CD14-positive monocyte (primary cell): ENCODE measurements at regions of chr16 and their contacts with region 1.

Region 1: DNA sequence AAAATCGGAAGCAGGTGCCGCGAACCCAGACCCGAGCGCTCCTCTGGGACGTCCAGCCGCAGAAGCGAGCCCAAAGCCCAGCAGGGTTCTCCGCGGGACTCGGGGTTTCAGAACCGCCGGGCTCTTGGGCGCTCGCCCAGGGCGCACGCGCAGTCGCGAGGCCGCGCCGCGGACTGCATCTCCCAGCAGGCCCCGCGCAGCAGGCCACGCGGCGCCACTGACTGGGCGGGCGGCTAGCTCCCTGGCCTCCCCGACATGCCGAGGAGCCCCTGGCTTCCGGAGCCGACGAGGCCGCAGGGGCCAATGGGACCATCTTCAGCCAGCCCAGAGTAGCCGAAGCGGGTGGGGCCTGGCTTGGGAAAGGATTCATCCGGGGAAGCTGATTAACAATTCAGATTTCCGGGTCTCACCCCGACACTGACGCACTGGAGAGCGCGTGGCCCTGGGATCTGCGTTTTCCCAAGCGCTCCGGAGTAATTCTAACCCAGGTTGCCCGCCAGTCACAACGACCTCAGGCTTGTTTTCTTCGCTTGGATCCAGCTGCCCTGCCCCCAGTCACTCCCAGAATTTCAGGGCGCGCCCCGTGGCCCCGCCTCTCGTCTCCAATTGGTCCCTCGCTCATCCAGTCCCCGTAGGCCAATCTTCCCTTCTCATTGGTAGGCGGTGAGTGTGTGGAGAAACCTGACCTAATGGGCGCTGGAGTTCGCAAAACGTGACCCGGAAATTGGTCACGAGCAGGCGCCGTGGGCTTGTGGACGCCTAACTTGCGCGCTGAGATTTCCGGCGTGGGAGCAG is at the start of gene ZNF263:
- DNase-seq: peak; percentile 94 to 97 (median 97)
- H3K4me3 ChIP-seq: peak within 1 kb of the TSS; percentile 79 to 90 (median 87)
- H3K4me3 Mint-ChIP-seq: peak within 1 kb of the TSS; percentile 91 to 98
- H3K27ac ChIP-seq: peak within 1 kb of the TSS; percentile 96
- H3K27ac Mint-ChIP-seq: peak within 1 kb of the TSS; percentile 95 to 99 (median 96)
- H3K4me1 ChIP-seq: peaks cover 37 to 43% of the 10 kb centered on the region in 2 donors
- H3K4me1 Mint-ChIP-seq: peaks cover 28% of the 10 kb centered on the region
- H3K27me3 ChIP-seq: peaks cover 0 to 4% of the 10 kb centered on the region in 2 donors
- H3K27me3 Mint-ChIP-seq: peaks cover 5 to 9% (median 7%) of the 10 kb centered on the region in 3 donors
- CTCF ChIP-seq: no peak
- polyA plus RNA-seq, gene ZNF263: 11.5 to 21.5 (median 13.1) TPM

Region 2: GRCh38 chr16:3234543-3235541 is 48.1 kb before region 1 on chr16 and contains the start of gene ZNF200:
- intact Hi-C with region 1: loop called (anchors 2 kb)
- DNase-seq: peak; percentile 88 to 91 (median 91)
- H3K4me3 ChIP-seq: peak within 1 kb of the TSS; percentile 73 to 97 (median 75)
- H3K4me3 Mint-ChIP-seq: peak within 1 kb of the TSS; percentile 91 to 96
- H3K27ac ChIP-seq: peak within 1 kb of the TSS; percentile 86 to 97
- H3K27ac Mint-ChIP-seq: peak within 1 kb of the TSS; percentile 97 to 99 (median 99)
- H3K4me1 ChIP-seq: peaks cover 12 to 13% of the 10 kb centered on the region in 2 donors
- H3K4me1 Mint-ChIP-seq: peaks cover 18% of the 10 kb centered on the region
- H3K27me3 ChIP-seq: no peaks in the 10 kb centered on the region
- H3K27me3 Mint-ChIP-seq: peaks cover 0 to 2% (median 1%) of the 10 kb centered on the region in 3 donors
- CTCF ChIP-seq: no peak
- polyA plus RNA-seq, gene ZNF200: 2.0 to 2.8 (median 2.5) TPM

Region 3: DNA sequence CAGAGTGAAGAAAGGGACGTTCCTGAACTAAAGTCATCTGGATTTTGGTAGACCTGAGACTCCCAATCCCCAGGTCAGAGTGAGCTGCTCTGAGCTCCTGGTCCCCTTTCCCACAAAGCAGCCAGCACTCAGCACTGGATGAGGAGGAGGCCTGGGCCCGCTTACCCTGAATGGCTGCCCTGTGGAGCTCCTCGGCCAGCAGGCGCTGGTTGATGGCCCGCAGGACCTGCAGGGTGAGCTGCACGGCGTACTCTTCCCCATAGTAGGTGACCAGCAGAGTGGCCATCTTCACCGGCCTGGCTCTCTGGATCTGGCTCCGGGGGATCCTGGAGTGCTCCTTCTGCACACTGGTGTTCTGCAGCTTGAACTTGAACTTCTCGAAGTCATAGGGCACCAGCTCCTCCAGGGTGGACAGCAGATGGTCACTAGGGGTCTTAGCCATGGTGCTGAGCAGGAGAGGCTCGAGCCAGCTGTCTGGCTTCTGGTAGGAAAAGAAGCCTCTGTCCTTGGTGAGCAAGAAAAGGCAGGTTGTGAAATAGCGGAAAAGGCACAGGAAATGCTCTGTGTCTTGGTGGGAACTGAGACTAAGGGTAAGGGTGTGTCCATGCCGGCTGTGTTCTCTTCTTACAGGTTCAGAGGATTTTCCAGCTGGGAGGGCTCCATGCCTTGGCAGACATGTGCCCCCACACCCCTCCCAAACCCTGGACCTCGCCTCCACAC is 26.6 kb before region 1 on chr16 and contains the start of gene MEFV:
- intact Hi-C with region 1: loop called in 1 of 2 experiments (anchors 2 kb)
- DNase-seq: peak; percentile 76 to 93 (median 92)
- H3K4me3 ChIP-seq: peak within 1 kb of the TSS; percentile 85 to 98 (median 92)
- H3K4me3 Mint-ChIP-seq: peak within 1 kb of the TSS; percentile 97 to 99
- H3K27ac ChIP-seq: peak within 1 kb of the TSS; percentile 90 to 98
- H3K27ac Mint-ChIP-seq: peak within 1 kb of the TSS; percentile 93 to 99 (median 98)
- H3K4me1 ChIP-seq: peaks cover 87 to 96% of the 10 kb centered on the region in 2 donors
- H3K4me1 Mint-ChIP-seq: peaks cover 95% of the 10 kb centered on the region
- H3K27me3 ChIP-seq: no peaks in the 10 kb centered on the region
- H3K27me3 Mint-ChIP-seq: peaks cover 0 to 2% (median 0%) of the 10 kb centered on the region in 3 donors
- CTCF ChIP-seq: no peak
- polyA plus RNA-seq, gene MEFV: 37.7 to 78.0 (median 73.2) TPM

Region 4: DNA sequence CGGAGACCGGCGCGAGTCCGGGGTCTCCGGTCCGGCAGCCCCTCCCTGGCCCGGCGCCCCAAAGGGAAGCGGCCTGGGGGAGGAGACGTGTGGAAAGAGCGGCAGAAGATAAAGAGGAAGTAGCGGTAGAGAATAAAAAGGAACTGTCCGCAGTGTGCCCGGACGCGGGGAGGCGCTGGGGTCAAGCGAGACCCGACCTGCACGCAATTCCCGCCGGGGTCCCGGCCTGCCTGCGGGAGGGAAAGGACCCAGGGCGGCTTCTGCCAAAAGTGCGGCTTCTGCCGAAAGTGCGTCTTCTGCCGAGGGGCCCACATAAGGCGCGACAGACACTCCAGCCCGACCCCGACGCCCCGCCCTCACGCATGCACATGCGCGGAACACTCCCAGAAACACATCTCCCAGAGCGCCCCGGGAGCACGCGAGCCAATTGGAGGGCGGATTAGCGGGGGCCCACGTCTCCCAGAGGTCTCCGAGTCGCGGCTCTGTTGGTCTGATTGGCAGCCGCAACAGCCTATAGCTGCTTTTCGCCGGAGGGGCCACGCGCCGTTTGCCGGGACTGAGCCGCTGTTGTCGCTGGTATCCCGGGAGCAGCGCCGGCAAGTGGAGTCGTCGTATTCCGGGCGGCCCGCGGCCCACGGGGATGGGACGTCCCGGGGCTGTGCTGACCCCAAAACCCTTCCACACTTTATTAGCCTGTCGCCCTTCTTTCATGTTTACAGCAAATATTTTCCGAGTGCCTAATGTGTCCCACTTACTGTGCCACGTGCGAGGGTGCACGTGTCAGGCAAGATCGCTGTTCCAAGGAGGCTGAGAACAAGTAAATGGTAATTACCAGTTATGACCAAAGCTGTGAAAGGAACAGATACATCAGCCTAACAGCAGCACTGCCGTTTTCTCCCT is 18.5 kb before region 1 on chr16:
- intact Hi-C with region 1: loop called in 1 of 2 experiments (anchors 2 kb)
- DNase-seq: peak; percentile 90 to 94 (median 92)
- H3K4me3 ChIP-seq: peak overlapping the region; percentile 81 to 89 (median 81)
- H3K4me3 Mint-ChIP-seq: peak overlapping the region; percentile 86 to 91
- H3K27ac ChIP-seq: peak overlapping the region; percentile 99 to 100
- H3K27ac Mint-ChIP-seq: peak overlapping the region; percentile 96 to 100 (median 98)
- H3K4me1 ChIP-seq: peaks cover 54 to 63% of the 10 kb centered on the region in 2 donors
- H3K4me1 Mint-ChIP-seq: peaks cover 68% of the 10 kb centered on the region
- H3K27me3 ChIP-seq: no peaks in the 10 kb centered on the region
- H3K27me3 Mint-ChIP-seq: peaks cover 0 to 6% (median 0%) of the 10 kb centered on the region in 3 donors
- CTCF ChIP-seq: peak; percentile 58

Region 5: GRCh38 chr16:3400779-3401688 is 118.1 kb after region 1 on chr16 and contains the starts of genes ZNF174 and ZSCAN32:
- intact Hi-C with region 1: loop called in 1 of 2 experiments (anchors 1 kb)
- DNase-seq: peak; percentile 98 to 99 (median 98)
- H3K4me3 ChIP-seq: peak within 1 kb of the TSS; percentile 72 to 90 (median 86)
- H3K4me3 Mint-ChIP-seq: peak within 1 kb of the TSS; percentile 85 to 96
- H3K27ac ChIP-seq: peak within 1 kb of the TSS; percentile 39 to 80
- H3K27ac Mint-ChIP-seq: peak within 1 kb of the TSS; percentile 79 to 89 (median 82)
- H3K4me1 ChIP-seq: peaks cover 19 to 30% of the 10 kb centered on the region in 2 donors
- H3K4me1 Mint-ChIP-seq: peaks cover 25% of the 10 kb centered on the region
- H3K27me3 ChIP-seq: no peaks in the 10 kb centered on the region
- H3K27me3 Mint-ChIP-seq: peaks cover 0 to 2% (median 0%) of the 10 kb centered on the region in 3 donors
- CTCF ChIP-seq: no peak
- polyA plus RNA-seq, gene ZNF174: 2.5 to 5.6 (median 4.9) TPM
- polyA plus RNA-seq, gene ZSCAN32: 5.7 to 7.7 (median 7.2) TPM

Region 6: GRCh38 chr16:3443108-3444031 is 160.4 kb after region 1 on chr16 and contains the starts of genes NAA60 and ZNF597:
- intact Hi-C with region 1: loop called in 1 of 2 experiments (anchors 5 kb)
- DNase-seq: peak; percentile 81 to 89 (median 87)
- H3K4me3 ChIP-seq: peak within 1 kb of the TSS; percentile 45 to 82 (median 76)
- H3K4me3 Mint-ChIP-seq: peak within 1 kb of the TSS; percentile 96 to 98
- H3K27ac ChIP-seq: peak within 1 kb of the TSS; percentile 68 to 79
- H3K27ac Mint-ChIP-seq: peak within 1 kb of the TSS; percentile 84 to 99 (median 94)
- H3K4me1 ChIP-seq: peaks cover 11 to 19% of the 10 kb centered on the region in 2 donors
- H3K4me1 Mint-ChIP-seq: peaks cover 11% of the 10 kb centered on the region
- H3K27me3 ChIP-seq: no peaks in the 10 kb centered on the region
- H3K27me3 Mint-ChIP-seq: peaks cover 3 to 9% (median 5%) of the 10 kb centered on the region in 3 donors
- CTCF ChIP-seq: no peak
- polyA plus RNA-seq, gene NAA60: 19.5 to 48.8 (median 29.7) TPM
- polyA plus RNA-seq, gene ZNF597: 0.80 to 1.0 (median 0.98) TPM

Region 7: DNA sequence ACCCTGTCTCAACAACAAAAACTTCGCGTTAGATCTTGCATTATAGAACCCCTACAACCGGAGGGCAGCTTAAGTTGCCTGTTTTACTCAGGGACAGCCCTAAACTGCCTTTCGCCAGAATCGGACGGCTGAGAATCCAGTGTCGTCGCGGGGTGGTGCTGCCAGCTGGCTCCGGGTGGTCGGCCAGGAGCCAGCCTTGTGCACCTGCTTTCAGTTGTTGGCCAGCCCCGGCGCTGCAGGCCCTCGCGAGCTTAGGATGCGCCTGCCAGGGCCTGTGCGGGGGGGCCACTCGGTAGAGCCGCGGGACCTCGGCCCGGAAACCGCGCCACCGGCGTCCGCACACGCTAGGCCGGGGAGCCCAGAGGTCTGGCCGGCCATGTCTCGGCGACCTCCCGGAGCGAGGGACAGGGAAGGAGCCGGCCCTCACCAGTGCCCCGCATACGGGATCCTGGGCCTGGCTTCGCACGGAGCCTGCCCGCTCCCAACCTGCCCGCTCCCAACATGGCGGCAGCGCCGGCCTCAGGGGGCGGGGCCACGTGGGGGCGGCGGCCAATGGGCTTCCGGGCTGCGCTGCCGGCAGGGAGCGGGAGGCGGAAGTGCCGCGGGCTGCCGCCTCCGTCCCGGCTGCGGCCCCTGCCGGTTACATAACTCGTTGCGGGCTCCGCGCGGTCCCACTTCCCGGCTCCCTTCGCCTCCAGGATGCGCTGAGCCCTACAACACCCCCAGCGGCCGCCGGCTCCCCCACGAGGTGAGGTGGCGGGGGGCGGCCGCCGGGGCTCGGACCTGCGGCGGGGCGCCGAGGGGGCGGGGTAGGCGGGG is 174.7 kb after region 1 on chr16:
- intact Hi-C with region 1: loop called in 1 of 2 experiments (anchors 5 kb)
- DNase-seq: peak; percentile 87 to 92 (median 91)
- H3K4me3 ChIP-seq: peak overlapping the region; percentile 63 to 89 (median 71)
- H3K4me3 Mint-ChIP-seq: peak overlapping the region; percentile 76 to 90
- H3K27ac ChIP-seq: peak overlapping the region; percentile 66 to 93
- H3K27ac Mint-ChIP-seq: peak overlapping the region; percentile 23 to 89 (median 80)
- H3K4me1 ChIP-seq: peaks cover 37 to 54% of the 10 kb centered on the region in 2 donors
- H3K4me1 Mint-ChIP-seq: peaks cover 57% of the 10 kb centered on the region
- H3K27me3 ChIP-seq: no peaks in the 10 kb centered on the region
- H3K27me3 Mint-ChIP-seq: peaks cover 0 to 3% (median 2%) of the 10 kb centered on the region in 3 donors
- CTCF ChIP-seq: peak; percentile 56